MCF 10A (cell line): ENCODE measurements at regions of chr11 and their contacts with region 1.

Region 1: DNA sequence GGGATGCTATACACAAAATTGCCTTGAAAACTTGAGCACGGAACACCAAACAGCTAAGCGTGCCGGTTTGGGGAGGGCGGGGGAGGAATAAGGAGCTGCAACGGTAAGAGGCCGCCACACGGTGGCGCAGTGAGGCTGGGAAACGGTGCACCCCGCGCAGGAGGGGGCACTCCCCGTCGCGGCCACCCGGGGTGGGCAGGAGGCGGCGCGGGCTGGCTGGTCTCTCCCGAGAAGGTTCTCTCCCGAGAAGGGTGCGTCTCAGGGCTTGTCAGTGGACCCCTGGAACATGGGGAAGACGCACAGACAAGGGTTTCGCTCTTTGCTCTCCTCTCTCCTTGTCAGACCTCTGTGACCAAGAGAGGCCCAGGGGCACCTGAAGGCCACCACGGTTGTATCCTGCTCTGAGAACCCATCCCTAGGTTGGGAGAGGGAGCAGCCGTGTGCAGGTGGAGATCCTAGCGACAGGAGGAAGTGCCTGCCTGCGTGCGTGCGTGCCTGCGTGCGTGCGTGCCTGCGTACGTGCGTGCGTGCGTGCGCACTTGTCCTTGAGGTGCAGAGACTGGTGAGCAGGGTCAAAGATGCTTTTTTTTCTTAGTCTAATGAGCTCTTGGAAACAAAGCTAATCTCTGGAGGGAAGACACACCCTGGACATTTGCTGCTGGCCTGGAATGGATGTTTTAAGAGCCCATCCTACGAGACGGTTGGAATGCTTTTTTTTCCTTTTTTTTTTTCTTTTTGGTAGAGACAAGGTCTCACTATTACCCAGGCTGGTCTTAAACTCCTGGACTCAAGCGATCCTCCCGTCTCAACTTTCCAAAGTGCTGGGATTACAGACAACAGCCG is 18.1 kb upstream of the JAM3 start:
- DNase-seq: peak; percentile 68
- H3K4me3 Mint-ChIP-seq: no peak overlapping the region
- H3K27ac Mint-ChIP-seq: no peak overlapping the region
- H3K4me1 Mint-ChIP-seq: peaks cover 21% of the 10 kb centered on the region
- H3K27me3 Mint-ChIP-seq: no peaks in the 10 kb centered on the region
- CTCF ChIP-seq: peak; percentile 92

Region 2: GRCh38 chr11:133917921-133918605 is 132.7 kb before region 1 on chr11:
- CTCF ChIA-PET with region 1: interaction called, 21 read pairs
- POLR2A ChIA-PET with region 1: no interaction called
- intact Hi-C with region 1: no loop called
- DNase-seq: no peak
- H3K4me3 Mint-ChIP-seq: no peak overlapping the region
- H3K27ac Mint-ChIP-seq: no peak overlapping the region
- H3K4me1 Mint-ChIP-seq: no peaks in the 10 kb centered on the region
- H3K27me3 Mint-ChIP-seq: no peaks in the 10 kb centered on the region
- CTCF ChIP-seq: no peak

Region 3: GRCh38 chr11:134033696-134034491 is 16.9 kb before region 1 on chr11:
- CTCF ChIA-PET with region 1: interaction called, 30 read pairs
- POLR2A ChIA-PET with region 1: interaction called, 27 read pairs
- intact Hi-C with region 1: no loop called
- DNase-seq: peak; percentile 86
- H3K4me3 Mint-ChIP-seq: peak overlapping the region; percentile 58
- H3K27ac Mint-ChIP-seq: peak overlapping the region; percentile 76
- H3K4me1 Mint-ChIP-seq: peaks cover 36% of the 10 kb centered on the region
- H3K27me3 Mint-ChIP-seq: no peaks in the 10 kb centered on the region
- CTCF ChIP-seq: no peak

Region 4: GRCh38 chr11:134069426-134070341 is 18.9 kb after region 1 on chr11:
- CTCF ChIA-PET with region 1: interaction called, 12 read pairs
- POLR2A ChIA-PET with region 1: no interaction called
- intact Hi-C with region 1: no loop called
- DNase-seq: no peak
- H3K4me3 Mint-ChIP-seq: no peak overlapping the region
- H3K27ac Mint-ChIP-seq: no peak overlapping the region
- H3K4me1 Mint-ChIP-seq: no peaks in the 10 kb centered on the region
- H3K27me3 Mint-ChIP-seq: peaks cover 46% of the 10 kb centered on the region
- CTCF ChIP-seq: no peak

Region 5: DNA sequence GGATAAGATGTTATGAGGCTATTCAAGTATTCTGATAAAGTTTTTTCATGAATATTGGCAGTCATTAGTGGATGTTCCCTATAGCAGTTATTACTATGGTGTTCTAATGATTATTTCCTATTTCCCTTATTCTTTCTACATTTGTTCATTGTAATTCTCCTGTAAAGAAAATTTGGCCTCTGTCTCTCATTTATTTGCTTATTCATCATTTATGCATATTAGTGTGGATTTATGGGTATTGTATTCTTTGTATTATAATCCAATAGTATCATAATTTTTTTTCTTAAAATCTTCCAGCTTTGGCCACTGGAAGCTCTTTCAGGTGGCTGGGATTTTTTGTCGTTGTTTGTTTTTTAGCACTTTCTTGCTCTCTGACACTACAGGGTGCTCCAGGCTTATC is 65.4 kb after region 1 on chr11:
- CTCF ChIA-PET with region 1: interaction called, 12 read pairs
- POLR2A ChIA-PET with region 1: interaction called, 6 read pairs
- intact Hi-C with region 1: no loop called
- DNase-seq: no peak
- H3K4me3 Mint-ChIP-seq: no peak overlapping the region
- H3K27ac Mint-ChIP-seq: no peak overlapping the region
- H3K4me1 Mint-ChIP-seq: peaks cover 28% of the 10 kb centered on the region
- H3K27me3 Mint-ChIP-seq: peaks cover 7% of the 10 kb centered on the region
- CTCF ChIP-seq: no peak

Region 6: DNA sequence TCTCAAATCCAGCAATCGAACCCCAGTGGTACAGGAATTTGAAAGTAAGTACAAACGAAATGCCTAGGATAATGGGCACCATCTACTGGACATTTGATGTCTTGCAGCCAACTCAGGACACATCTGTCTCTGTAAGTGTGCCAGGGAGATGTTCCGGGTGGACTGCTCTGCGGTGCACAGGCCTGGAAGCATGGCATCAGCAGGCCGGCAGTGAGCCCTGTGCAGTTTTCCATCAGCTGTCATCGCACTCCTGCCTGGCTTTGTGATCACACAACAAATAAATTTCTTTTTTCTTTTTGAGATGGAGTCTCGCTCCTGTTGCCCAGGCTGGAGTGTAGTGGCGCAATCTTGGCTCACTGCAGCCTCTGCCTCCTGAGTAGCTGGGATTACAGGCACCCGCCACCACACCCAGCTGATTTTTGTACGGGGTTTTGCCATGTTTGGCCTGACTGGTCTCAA is 89.1 kb after region 1 on chr11:
- CTCF ChIA-PET with region 1: interaction called, 168 read pairs
- POLR2A ChIA-PET with region 1: interaction called, 3 read pairs
- intact Hi-C with region 1: loop called (anchors 1 kb)
- DNase-seq: peak; percentile 75
- H3K4me3 Mint-ChIP-seq: no peak overlapping the region
- H3K27ac Mint-ChIP-seq: no peak overlapping the region
- H3K4me1 Mint-ChIP-seq: peaks cover 3% of the 10 kb centered on the region
- H3K27me3 Mint-ChIP-seq: peaks cover 20% of the 10 kb centered on the region
- CTCF ChIP-seq: peak; percentile 85